ENCODE measurements at regions of chrX and their contacts with region 1.

Region 1: DNA sequence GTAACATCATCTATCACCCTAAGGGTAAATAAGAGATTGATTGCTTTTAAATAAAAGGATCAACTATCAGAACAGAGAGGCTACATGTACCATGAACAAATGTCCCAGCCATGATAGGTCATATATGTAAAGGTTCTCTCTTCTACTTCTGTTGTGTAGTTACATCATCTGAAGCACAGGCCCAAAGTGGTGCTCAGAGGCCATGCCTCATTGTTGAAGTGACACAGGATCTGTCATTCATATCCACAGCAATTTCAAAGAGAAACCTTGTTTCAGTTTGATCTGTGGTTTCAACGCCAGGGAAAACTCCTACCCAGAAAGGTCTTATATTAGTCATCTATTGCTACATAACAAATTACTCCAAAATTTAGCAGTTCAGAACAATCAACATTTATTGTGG is 269.2 kb upstream of the MAOA start:
- DNase-seq: no peak
- H3K4me3 ChIP-seq: no peak overlapping the region
- H3K27ac ChIP-seq: no peak overlapping the region
- H3K27me3 ChIP-seq: peaks cover 0 to 63% (median 16%) of the 10 kb centered on the region in 45 donors
- CTCF ChIP-seq: no peak

Region 2: GRCh38 chrX:43436517-43436916 is 49.6 kb after region 1 on chrX:
- intact Hi-C with region 1: loop called in 1 of 2 experiments (anchors 2 kb)
- DNase-seq: no peak
- H3K4me3 ChIP-seq: no peak overlapping the region
- H3K27ac ChIP-seq: no peak overlapping the region
- H3K27me3 ChIP-seq: peaks cover 0 to 59% (median 10%) of the 10 kb centered on the region in 45 donors
- CTCF ChIP-seq: no peak

Region 3: GRCh38 chrX:43448688-43449087 is 61.8 kb after region 1 on chrX:
- intact Hi-C with region 1: no loop called
- DNase-seq: no peak
- H3K4me3 ChIP-seq: no peak overlapping the region
- H3K27ac ChIP-seq: no peak overlapping the region
- H3K27me3 ChIP-seq: peaks cover 0 to 37% (median 4%) of the 10 kb centered on the region in 45 donors
- CTCF ChIP-seq: no peak

Measured in dorsolateral prefrontal cortex (tissue), 120 donors.